Brain microvascular endothelial cell (primary cell): ENCODE measurements at regions of chr2 and their contacts with region 1.

Region 1: GRCh38 chr2:186641807-186642321 is 52.0 kb upstream of the FAM171B start:
- DNase-seq: peak; percentile 59
- H3K4me3 ChIP-seq: no peak overlapping the region
- H3K27ac ChIP-seq: no peak overlapping the region
- H3K27me3 ChIP-seq: no peaks in the 10 kb centered on the region
- CTCF ChIP-seq: peak; percentile 81

Region 2: GRCh38 chr2:186319105-186319504 is 322.8 kb before region 1 on chr2:
- in situ Hi-C with region 1: no loop called
- DNase-seq: no peak
- H3K4me3 ChIP-seq: no peak overlapping the region
- H3K27ac ChIP-seq: no peak overlapping the region
- H3K27me3 ChIP-seq: no peaks in the 10 kb centered on the region
- CTCF ChIP-seq: no peak

Region 3: DNA sequence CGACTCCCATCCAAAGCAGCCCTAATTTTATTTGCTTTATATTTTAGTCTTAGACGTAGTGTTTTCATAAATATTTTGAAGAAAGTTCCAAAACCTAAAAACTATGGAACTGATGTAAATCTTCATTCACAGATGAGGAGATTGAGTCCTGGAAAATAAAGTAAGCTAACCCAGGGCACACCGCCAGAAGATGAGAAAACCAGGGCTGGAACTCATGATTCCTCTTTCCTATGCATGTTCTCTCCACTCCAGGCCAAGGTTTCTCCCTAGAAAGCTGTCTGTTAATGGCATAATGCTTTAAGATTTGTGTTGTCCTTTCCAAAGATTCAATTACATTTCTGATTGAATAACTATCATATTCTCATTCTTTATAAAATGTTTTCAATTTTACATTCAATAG is 234.3 kb before region 1 on chr2:
- in situ Hi-C with region 1: no loop called
- DNase-seq: no peak
- H3K4me3 ChIP-seq: no peak overlapping the region
- H3K27ac ChIP-seq: no peak overlapping the region
- H3K27me3 ChIP-seq: no peaks in the 10 kb centered on the region
- CTCF ChIP-seq: no peak

Region 4: DNA sequence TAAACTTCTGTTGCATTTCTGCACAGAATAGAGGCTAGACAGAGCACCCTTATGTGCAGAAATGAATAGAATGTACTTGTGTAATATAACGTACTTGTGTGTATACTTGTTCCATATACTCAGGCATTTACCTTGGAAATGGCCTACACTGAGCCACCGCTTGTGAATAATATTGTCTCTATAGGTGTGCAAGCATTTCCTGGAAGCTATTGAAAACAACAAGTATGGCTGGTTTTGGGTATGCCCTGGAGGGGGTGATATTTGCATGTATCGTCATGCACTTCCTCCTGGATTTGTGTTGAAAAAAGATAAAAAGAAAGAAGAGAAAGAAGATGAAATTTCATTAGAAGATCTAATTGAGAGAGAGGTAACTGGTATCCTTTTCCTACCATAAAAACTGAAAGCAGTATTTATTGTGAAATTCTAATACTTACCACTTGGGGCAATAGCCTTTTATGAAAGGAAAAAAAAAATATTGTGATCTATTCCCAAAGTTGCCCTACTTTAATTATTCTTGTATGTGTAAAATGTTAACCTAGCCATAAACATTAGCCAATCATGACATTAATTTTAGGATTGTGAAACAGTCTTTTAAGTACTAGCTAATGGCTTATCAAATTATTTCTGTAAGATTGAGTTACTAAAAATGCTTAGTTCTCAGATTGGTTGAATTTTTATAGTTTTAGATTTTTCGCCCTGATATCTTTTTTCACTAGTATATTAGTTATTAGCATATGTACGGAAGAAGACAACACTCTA is 137.8 kb before region 1 on chr2:
- in situ Hi-C with region 1: loop called (anchors 25 kb)
- DNase-seq: no peak
- H3K4me3 ChIP-seq: no peak overlapping the region
- H3K27ac ChIP-seq: no peak overlapping the region
- H3K27me3 ChIP-seq: no peaks in the 10 kb centered on the region
- CTCF ChIP-seq: no peak